Heart right ventricle (tissue), 16 donors: ENCODE measurements at regions of chr9 and their contacts with region 1.

Region 1: DNA sequence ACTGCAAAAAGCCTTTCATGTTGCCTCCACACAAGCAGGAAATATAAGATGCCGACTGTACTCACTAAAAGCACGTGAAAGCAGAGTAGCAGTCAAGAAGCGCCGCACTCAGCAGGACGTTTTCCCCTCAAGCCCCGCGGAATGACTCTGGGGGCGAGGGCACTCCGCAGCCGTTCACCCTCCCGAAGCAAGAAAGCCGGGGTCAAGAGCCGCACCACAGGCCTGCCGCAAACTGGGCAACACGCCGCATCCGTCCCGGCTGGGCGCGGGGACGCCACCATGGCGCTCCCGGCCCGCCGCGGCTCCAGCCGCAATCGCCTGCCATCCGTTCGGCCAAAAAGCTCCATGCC is 364 bp downstream of the RPS6 start:
- DNase-seq: peak; percentile 37 to 50
- ATAC-seq: peak; percentile 42 to 76 (median 68)
- H3K4me3 ChIP-seq: peak overlapping the region; percentile 56 to 86 (median 72)
- H3K27ac ChIP-seq: peak overlapping the region; percentile 83 to 96 (median 88)
- H3K4me1 ChIP-seq: peaks cover 0 to 40% (median 27%) of the 10 kb centered on the region in 9 donors
- H3K27me3 ChIP-seq: no peaks in the 10 kb centered on the region
- CTCF ChIP-seq: no peak

Region 2: DNA sequence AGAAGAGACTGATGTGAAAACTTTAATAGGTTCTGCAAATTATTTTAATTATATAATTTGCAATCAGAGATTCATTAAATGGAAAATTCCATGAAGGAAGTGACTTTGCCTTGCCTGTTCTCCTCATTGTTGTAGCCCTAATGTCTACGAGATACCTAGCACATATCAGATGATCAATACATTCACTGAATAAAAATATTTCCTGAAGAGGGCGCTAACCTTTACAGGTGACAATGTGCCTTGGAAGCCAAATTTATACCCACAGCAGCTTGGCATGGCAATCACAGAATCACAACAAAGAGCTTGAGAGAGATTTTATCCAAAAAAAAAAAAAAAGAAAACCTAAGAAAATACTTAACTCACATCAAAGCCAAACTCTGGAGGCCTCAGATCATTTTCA is 294.4 kb before region 1 on chr9:
- intact Hi-C with region 1: loop called in 2 of 10 experiments (anchors 10 kb)
- DNase-seq: no peak
- ATAC-seq: no peak
- H3K4me3 ChIP-seq: no peak overlapping the region
- H3K27ac ChIP-seq: no peak overlapping the region
- H3K4me1 ChIP-seq: no peaks in the 10 kb centered on the region
- H3K27me3 ChIP-seq: no peaks in the 10 kb centered on the region
- CTCF ChIP-seq: peak in 7 of 9 donors; percentile 7 to 47 (median 38)

Region 3: GRCh38 chr9:19102631-19103345 is 276.9 kb before region 1 on chr9 and contains the start of gene HAUS6:
- intact Hi-C with region 1: loop called in 1 of 10 experiments (anchors 10 kb)
- DNase-seq: peak; percentile 95 to 97
- ATAC-seq: peak; percentile 99 to 100 (median 100)
- H3K4me3 ChIP-seq: peak within 1 kb of the TSS; percentile 64 to 91 (median 78)
- H3K27ac ChIP-seq: peak within 1 kb of the TSS; percentile 44 to 91 (median 90)
- H3K4me1 ChIP-seq: peaks cover 0 to 26% (median 17%) of the 10 kb centered on the region in 9 donors
- H3K27me3 ChIP-seq: no peaks in the 10 kb centered on the region
- CTCF ChIP-seq: peak; percentile 22 to 71 (median 50)
- total RNA-seq, gene HAUS6: 4.9 to 10.4 (median 7.2) TPM

Region 4: GRCh38 chr9:19408693-19409400 is 29.2 kb after region 1 on chr9 and contains the start of gene ACER2:
- intact Hi-C with region 1: loop called in 4 of 10 experiments (anchors 1 to 2 kb)
- DNase-seq: peak; percentile 96 to 98
- ATAC-seq: peak; percentile 97 to 100 (median 98)
- H3K4me3 ChIP-seq: peak within 1 kb of the TSS; percentile 70 to 98 (median 92)
- H3K27ac ChIP-seq: peak within 1 kb of the TSS; percentile 82 to 96 (median 90)
- H3K4me1 ChIP-seq: peaks cover 0 to 46% (median 22%) of the 10 kb centered on the region in 9 donors
- H3K27me3 ChIP-seq: no peaks in the 10 kb centered on the region
- CTCF ChIP-seq: peak in 4 of 9 donors; percentile 7 to 23 (median 20)
- total RNA-seq, gene ACER2: 1.7 to 8.7 (median 4.0) TPM

Region 5: DNA sequence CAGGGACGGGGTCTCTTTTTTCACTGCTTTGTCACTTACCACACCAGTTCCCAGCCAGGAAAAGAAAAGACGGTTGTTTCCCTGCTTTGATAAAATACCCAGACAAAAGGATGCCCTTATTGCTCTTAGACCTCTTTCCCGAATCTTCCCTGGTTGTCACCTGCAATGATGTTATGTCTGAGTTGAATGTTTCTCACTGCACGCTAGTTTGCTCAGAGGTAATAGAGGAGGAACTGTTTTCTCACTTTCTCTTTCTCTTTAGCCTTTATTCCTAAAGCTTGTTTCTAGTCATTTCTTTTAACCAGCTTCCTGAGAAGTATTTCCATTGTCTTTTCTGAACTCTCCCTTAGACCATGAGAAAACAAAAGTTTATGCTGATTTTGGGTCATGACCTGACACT is 62.1 kb after region 1 on chr9:
- intact Hi-C with region 1: loop called in 1 of 10 experiments (anchors 10 kb)
- DNase-seq: no peak
- ATAC-seq: no peak
- H3K4me3 ChIP-seq: peak overlapping the region in 3 of 10 donors; percentile 17 to 34 (median 20)
- H3K27ac ChIP-seq: peak overlapping the region in 8 of 10 donors; percentile 5 to 51 (median 35)
- H3K4me1 ChIP-seq: peaks cover 0 to 18% (median 3%) of the 10 kb centered on the region in 9 donors
- H3K27me3 ChIP-seq: no peaks in the 10 kb centered on the region
- CTCF ChIP-seq: no peak